GM13976 (cell line): ENCODE measurements at regions of chr6 and their contacts with region 1.

Region 1: DNA sequence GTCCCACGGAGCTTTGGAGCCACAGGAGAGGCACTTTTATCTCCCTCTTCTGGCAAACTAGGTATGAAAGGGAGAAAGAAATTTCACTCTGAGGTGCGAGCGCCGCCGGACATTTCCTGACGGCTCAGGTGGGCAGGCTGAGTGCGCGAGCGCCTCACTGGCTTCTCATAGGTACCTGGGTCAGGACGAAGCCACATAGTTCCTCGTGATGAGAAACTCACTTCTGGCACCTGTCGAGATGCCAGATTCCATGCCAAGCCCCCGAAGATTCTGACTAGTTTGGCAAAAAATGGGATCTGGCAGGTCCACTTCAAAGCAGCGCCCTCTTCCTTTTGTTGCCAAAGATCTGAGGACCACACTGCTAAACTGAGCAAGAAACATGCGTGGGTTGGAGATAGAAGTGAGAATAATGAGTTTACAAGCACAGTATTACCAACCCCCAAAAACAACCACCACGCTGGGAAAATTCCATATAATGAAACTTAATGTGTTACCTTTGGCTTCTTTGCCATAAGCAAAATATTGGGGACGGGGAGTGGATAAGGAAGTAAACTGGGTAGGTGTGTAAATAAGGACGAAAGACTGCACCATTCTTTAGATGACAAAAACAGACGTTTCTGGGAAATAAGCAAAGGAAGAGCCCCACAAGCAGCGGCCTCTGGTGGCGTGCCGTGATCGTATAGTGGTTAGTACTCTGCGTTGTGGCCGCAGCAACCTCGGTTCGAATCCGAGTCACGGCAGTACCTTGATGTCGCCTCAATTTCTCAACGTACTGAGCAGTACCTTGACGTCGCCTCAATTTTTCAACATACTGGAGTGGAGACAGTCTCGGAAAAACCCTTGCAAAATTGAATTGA is 89.8 kb upstream of the PRSS16 start:
- DNase-seq: peak; percentile 60
- CTCF ChIP-seq: peak; percentile 65

Region 2: GRCh38 chr6:27809939-27810767 is 652.5 kb after region 1 on chr6:
- in situ Hi-C with region 1: loop called (anchors 10 kb)
- DNase-seq: peak; percentile 84
- CTCF ChIP-seq: no peak

Region 3: DNA sequence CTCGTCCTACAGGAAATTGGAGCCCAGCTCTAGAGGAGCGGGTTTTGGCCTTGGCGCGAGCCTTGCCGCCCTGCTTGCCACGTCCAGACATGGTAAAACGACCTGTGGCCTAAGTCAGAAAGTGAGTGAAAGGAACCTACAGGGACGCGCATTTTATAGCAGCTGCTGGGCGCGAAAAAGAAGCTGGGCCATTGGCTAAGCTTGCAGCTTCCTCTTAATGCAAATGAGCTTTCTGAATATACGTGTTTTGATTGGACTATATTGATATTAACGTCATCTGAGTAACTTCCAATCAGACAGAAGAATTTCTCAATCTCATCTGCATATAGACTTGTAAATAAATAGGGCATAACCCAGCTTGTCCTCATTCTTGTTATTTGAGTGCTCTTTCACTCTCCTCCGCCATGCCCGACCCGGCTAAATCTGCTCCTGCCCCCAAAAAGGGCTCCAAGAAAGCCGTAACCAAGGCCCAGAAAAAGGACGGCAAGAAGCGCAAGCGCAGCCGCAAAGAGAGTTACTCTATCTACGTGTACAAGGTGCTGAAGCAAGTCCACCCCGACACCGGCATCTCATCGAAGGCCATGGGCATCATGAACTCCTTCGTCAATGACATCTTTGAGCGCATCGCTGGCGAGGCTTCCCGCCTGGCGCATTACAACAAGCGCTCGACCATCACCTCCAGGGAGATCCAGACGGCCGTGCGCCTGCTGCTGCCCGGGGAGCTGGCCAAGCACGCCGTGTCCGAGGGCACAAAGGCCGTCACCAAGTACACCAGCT is 735.6 kb after region 1 on chr6:
- in situ Hi-C with region 1: loop called (anchors 10 kb)
- DNase-seq: peak; percentile 90
- CTCF ChIP-seq: no peak

Region 4: DNA sequence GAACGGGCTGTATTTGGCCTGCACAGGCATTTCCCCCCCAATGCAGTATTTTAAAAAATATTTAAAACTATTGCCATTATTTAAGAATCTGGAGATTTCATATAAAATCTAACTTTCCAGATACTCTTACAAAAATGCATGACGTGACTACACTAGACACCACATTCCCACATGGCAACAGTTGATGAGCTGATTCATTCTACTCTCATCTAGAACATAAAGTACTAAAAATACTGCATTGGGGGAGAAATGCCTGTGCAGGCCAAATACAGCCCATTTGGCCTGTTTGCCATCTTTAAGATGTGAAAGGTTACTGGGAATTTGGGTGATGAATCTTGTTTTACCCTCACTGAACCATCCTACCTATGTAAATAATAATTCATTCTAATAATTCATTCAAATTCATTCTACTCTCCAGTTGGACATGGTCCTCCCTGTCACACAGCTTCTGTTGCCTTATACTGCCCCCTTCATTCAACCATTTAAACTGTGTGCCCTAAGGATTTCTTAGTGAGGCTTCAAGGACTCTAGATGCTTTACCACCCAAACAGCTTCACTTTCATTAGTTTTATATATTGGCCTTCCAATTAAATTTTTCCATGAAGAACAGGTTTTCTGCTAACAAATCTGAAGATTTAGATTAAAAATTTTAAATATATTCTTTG is 959.8 kb after region 1 on chr6:
- in situ Hi-C with region 1: no loop called
- DNase-seq: no peak
- CTCF ChIP-seq: no peak